PC-9 (cell line): ENCODE measurements at regions of chr2 and their contacts with region 1.

Region 1: GRCh38 chr2:228527197-228527881 is 345.9 kb upstream of the SPHKAP start:
- DNase-seq: no peak
- H3K4me3 ChIP-seq: no peak overlapping the region
- H3K27ac ChIP-seq: no peak overlapping the region
- H3K4me1 ChIP-seq: no peaks in the 10 kb centered on the region
- H3K27me3 ChIP-seq: no peaks in the 10 kb centered on the region
- CTCF ChIP-seq: no peak

Region 2: DNA sequence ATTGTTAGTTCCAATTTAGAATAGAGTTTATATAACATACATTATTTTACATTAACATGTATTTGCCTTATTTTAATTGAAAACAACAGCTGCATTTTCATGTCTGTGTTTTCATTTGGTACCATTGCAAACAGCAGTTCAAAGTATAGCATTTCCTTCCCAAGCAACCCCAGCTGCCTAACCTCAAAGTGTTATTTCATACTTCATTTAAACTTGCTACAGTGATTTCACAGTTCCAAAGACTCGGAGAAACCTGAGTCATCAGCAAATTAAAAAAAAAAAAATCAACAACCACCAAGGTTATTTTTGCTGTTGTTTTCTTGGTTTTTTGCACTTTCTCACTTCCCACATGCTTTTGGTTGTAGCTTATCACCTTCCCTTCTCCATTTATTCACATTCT is 109.4 kb before region 1 on chr2:
- CTCF ChIA-PET with region 1: no interaction called
- POLR2A ChIA-PET with region 1: interaction called, 13 read pairs
- intact Hi-C with region 1: no loop called
- DNase-seq: no peak
- H3K4me3 ChIP-seq: no peak overlapping the region
- H3K27ac ChIP-seq: peak overlapping the region; percentile 59
- H3K4me1 ChIP-seq: peaks cover 15% of the 10 kb centered on the region
- H3K27me3 ChIP-seq: no peaks in the 10 kb centered on the region
- CTCF ChIP-seq: no peak

Region 3: DNA sequence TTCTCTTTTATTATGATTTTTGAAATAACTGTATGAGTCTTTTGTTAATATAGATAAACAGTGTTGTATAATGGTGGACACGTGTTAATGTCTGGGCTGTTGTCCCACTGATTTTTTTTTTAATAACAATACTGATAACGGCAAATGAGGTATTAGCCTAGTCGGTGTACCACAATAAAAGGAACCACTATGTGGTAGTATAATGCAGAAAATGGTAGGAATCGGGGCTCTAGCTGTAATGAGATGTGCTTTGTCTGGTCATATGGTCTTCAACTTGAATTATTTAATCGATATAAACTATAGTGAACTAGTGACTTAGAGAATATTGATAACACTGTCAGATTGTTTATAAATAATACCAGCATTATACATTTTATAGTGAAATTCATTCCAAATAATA is 172.1 kb after region 1 on chr2:
- CTCF ChIA-PET with region 1: no interaction called
- POLR2A ChIA-PET with region 1: no interaction called
- intact Hi-C with region 1: no loop called
- DNase-seq: no peak
- H3K4me3 ChIP-seq: no peak overlapping the region
- H3K27ac ChIP-seq: no peak overlapping the region
- H3K4me1 ChIP-seq: no peaks in the 10 kb centered on the region
- H3K27me3 ChIP-seq: no peaks in the 10 kb centered on the region
- CTCF ChIP-seq: no peak